Breast epithelium (tissue), 4 donors: ENCODE measurements at regions of chr1 and their contacts with region 1.

Region 1: GRCh38 chr1:160136121-160136925 is 15.1 kb upstream of the ATP1A4 start:
- DNase-seq: no peak
- H3K4me3 ChIP-seq: no peak overlapping the region
- H3K27ac ChIP-seq: no peak overlapping the region
- H3K4me1 ChIP-seq: no peaks in the 10 kb centered on the region
- H3K27me3 ChIP-seq: no peaks in the 10 kb centered on the region
- CTCF ChIP-seq: no peak
- POLR2A ChIP-seq: no peak

Region 2: GRCh38 chr1:160167588-160167987 is 31.3 kb after region 1 on chr1:
- intact Hi-C with region 1: loop called (anchors 1 kb)
- DNase-seq: no peak
- H3K4me3 ChIP-seq: no peak overlapping the region
- H3K27ac ChIP-seq: no peak overlapping the region
- H3K4me1 ChIP-seq: no peaks in the 10 kb centered on the region
- H3K27me3 ChIP-seq: no peaks in the 10 kb centered on the region
- CTCF ChIP-seq: no peak
- POLR2A ChIP-seq: no peak